HEK293T (cell line): ENCODE measurements at regions of chr22 and their contacts with region 1.

Region 1: DNA sequence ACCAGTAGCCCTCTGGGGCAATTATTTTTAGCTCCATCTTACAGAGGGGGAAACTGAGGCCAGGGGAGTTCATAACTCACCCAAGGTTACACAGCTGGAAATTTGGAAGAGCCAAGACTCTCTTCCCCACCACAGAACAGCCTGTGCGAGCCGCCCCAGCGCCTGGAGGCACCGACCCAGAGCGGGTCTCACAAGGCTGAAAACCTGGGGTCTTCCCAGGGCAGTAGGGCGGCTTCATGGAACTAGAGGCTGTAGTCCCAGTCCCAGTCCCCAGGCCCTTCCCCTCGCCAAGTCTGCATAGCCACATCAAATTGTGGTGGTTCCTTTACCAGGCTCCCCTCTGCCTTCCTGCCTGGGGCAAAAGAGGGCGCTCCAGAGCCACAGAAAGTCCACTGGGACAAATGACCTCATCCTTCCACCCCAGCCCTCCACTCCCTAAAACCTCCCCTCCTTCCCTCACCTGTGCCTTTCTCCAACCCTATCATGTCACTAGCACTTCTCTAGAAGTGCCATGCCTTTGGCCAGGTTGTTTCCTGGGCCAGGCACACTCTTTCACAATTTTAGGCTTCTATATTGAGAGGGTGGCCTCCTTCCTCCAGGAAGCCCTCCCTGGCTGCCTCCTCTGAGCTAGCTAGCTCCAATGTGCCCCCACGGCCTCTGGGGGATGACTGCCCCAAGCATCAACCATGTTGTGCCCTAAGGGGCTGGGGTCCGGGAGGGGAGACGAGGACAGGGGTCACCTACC is 15.2 kb upstream of the CDC42EP1 start:
- DNase-seq: peak; percentile 82

Region 2: GRCh38 chr22:37561212-37562048 is 16.3 kb after region 1 on chr22:
- CTCF ChIA-PET with region 1: interaction called, 32 read pairs
- POLR2A ChIA-PET with region 1: interaction called, 25 read pairs
- DNase-seq: peak; percentile 94

Region 3: GRCh38 chr22:37566903-37567820 is 22.0 kb after region 1 on chr22:
- CTCF ChIA-PET with region 1: interaction called, 32 read pairs
- POLR2A ChIA-PET with region 1: interaction called, 25 read pairs
- DNase-seq: peak; percentile 79

Region 4: GRCh38 chr22:37661160-37661924 is 116.2 kb after region 1 on chr22:
- CTCF ChIA-PET with region 1: no interaction called
- POLR2A ChIA-PET with region 1: no interaction called
- DNase-seq: peak; percentile 64